ENCODE measurements at regions of chr13 and their contacts with region 1.

Region 1: DNA sequence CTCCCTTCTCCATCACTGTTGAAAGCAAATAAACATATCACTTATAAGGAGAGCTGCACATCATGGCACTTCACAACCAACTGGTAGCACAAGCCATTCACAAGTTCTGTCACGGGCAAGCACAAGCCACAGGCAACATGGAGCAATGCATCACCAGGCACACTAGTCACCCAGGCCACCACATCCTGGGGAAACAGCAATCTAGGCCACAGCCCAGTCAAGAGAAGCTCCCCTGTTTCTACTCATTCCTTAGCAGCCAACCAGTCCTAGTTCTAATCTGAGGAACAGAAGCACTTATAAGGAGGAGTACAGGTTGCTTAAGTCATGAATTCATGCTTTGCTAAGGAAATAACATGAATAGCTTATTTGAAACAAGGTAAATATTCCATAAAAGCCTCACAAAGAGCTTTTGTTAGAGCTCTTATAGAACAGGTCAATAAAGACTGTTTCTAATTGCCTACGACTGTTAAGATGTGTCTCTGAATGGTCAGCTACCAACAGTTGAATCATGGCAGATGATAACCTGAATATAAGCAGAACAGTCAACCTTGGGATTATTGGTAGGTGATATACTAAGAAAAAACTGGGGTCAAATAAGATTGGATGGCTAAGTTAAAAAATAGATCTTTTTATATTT is 169.0 kb downstream of the TBC1D4 start:
- DNase-seq: peak; percentile 41
- ATAC-seq: peak; percentile 93
- H3K4me3 Mint-ChIP-seq: no peak overlapping the region
- H3K27ac Mint-ChIP-seq: peak overlapping the region; percentile 34
- H3K4me1 Mint-ChIP-seq: peaks cover 21% of the 10 kb centered on the region
- H3K27me3 Mint-ChIP-seq: no peaks in the 10 kb centered on the region

Region 2: DNA sequence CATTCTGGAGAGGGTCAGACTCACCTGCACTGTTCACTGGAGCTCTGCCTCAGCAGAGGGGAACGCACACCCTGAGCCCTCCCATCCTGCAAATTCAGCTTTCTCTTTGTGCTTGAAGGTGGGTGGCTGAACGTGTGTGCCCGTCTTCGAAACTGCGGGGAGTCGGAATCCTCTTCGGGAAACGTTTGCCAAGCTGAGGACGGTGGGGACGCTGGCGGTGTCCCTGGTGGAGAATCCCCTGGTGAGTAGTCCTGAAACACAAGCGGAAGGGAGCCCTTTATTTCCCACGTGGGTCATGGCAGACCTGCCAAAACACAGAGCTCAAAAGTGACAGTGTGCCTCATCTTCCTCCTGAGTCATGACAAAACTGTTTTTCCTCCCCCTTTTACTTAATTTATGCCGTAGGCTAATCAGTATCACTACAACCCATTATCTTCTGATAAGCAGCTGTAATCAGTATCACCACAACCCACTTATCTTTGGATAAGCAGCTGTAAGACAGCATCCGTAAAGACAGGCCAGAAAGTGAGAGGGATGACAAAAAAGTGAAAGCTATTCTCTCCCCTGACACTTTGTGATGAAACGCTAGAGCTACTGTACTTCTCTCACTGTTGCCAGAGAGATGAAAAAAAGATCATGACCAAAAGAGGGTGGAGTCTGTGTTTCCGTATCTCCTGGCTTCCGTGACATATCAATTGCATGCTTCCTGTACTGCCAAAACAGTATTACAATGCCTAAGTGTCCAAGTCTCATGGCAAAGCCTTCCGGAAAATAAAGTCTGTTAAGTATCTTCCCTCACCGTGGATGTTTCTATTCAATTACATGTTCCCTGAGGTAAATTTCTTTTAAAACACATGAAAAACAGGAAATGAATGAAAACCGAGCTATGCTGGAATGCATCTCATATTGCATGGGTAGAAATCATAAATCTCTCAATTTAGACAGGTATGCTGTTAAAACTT is 13.5 kb after region 1 on chr13:
- POLR2A ChIA-PET with region 1: interaction called, 22 read pairs
- DNase-seq: peak; percentile 67
- ATAC-seq: peak; percentile 90
- H3K4me3 Mint-ChIP-seq: peak overlapping the region; percentile 95
- H3K27ac Mint-ChIP-seq: peak overlapping the region; percentile 98
- H3K4me1 Mint-ChIP-seq: peaks cover 34% of the 10 kb centered on the region
- H3K27me3 Mint-ChIP-seq: no peaks in the 10 kb centered on the region

Region 3: DNA sequence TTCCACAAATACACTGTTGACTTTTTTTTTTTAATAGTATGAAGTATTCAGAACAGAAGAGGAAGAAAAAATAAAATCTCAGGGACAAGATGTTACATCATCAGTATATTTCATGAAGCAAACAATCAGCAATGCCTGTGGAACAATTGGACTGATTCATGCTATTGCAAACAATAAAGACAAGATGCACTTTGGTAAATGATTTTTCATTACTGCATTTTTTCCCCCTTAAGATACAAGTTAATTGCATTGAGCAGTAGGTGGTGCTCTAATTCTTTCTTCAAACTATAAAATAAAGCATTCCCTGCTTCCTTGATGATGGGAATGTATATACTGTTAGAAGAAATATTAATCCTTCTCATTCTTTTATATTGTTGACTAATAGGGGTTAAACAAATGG is 253.7 kb after region 1 on chr13:
- POLR2A ChIA-PET with region 1: no interaction called
- DNase-seq: no peak
- ATAC-seq: no peak
- H3K4me3 Mint-ChIP-seq: no peak overlapping the region
- H3K27ac Mint-ChIP-seq: no peak overlapping the region
- H3K4me1 Mint-ChIP-seq: no peaks in the 10 kb centered on the region
- H3K27me3 Mint-ChIP-seq: no peaks in the 10 kb centered on the region

Measured in activated naive CD8-positive, alpha-beta T cell treated with anti-CD3 and anti-CD28 coated beads, Interleukin-2, amount 10 ng/mL, durations not matched to agents 7 days and 5 days (primary cell).